ENCODE measurements at regions of chr11 and their contacts with region 1.

Region 1: DNA sequence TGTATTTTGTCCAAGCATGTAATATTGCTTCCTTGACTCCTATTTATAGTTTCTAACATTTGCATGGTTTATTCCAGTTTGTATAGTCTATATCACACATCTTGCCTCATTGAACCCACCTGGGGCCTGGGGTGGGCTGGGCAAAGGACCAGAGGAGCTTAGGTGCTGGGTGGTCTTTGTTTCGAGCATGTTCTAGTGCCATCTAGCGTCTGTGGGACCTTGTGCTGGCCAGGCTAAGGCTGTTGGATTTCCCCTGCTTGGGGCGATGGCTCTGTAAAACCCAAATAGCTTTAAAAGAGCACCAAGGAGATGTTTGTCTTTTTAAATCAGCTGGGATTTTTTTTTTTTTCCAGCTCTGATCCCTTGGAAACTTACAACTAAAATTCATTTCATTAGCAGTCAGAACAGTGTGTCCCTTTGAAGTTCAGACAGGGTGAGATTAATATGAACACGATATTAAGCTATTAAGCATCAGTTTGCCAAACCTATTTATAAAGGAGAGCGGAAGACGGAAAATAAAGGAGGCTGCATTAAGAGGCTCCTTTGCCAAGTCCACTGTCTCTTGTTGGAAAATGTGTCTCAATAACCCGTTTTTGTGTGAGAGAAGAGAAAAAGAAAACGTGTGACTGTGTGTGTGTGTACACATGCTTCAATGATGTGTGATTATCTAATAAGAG is 157.4 kb downstream of the COMMD9 start:
- DNase-seq: no peak
- H3K4me3 ChIP-seq: no peak overlapping the region
- H3K27ac ChIP-seq: no peak overlapping the region
- H3K27me3 ChIP-seq: no peaks in the 10 kb centered on the region
- CTCF ChIP-seq: peak; percentile 82

Region 2: GRCh38 chr11:35650006-35650405 is 481.9 kb before region 1 on chr11:
- CTCF ChIA-PET with region 1: no interaction called
- POLR2A ChIA-PET with region 1: no interaction called
- DNase-seq: no peak
- H3K4me3 ChIP-seq: no peak overlapping the region
- H3K27ac ChIP-seq: no peak overlapping the region
- H3K27me3 ChIP-seq: no peaks in the 10 kb centered on the region
- CTCF ChIP-seq: no peak

Region 3: DNA sequence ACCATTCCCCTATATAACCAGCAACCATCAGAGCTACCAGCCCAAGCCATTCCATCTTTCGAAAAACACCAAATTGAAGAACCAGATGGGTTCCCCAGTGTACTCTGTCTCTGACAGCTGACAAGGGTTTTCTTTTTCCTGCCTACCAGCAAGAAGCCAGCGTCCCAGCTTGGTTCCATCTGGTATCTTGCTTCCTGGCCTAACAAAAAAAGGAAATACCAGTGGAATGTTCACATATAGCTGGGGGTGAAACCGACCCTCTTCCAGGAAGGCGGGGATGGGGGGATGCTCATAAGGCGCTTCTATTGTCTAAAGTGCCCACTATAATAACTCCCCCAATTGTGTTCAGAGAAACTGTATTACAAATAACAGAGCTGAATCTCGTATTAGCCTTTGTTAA is 15.7 kb before region 1 on chr11:
- CTCF ChIA-PET with region 1: interaction called, 16 read pairs
- POLR2A ChIA-PET with region 1: no interaction called
- DNase-seq: no peak
- H3K4me3 ChIP-seq: no peak overlapping the region
- H3K27ac ChIP-seq: no peak overlapping the region
- H3K27me3 ChIP-seq: no peaks in the 10 kb centered on the region
- CTCF ChIP-seq: no peak

Region 4: GRCh38 chr11:36149538-36150242 is 17.8 kb after region 1 on chr11:
- CTCF ChIA-PET with region 1: interaction called, 13 read pairs
- POLR2A ChIA-PET with region 1: no interaction called
- DNase-seq: peak; percentile 97
- H3K4me3 ChIP-seq: no peak overlapping the region
- H3K27ac ChIP-seq: peak overlapping the region; percentile 95
- H3K27me3 ChIP-seq: no peaks in the 10 kb centered on the region
- CTCF ChIP-seq: peak; percentile 67

Region 5: GRCh38 chr11:36258730-36259360 is 127.0 kb after region 1 on chr11:
- CTCF ChIA-PET with region 1: interaction called, 10 read pairs
- POLR2A ChIA-PET with region 1: no interaction called
- DNase-seq: peak; percentile 45
- H3K4me3 ChIP-seq: no peak overlapping the region
- H3K27ac ChIP-seq: no peak overlapping the region
- H3K27me3 ChIP-seq: peaks cover 14% of the 10 kb centered on the region
- CTCF ChIP-seq: peak; percentile 81

Region 6: GRCh38 chr11:36326524-36327419 is 194.9 kb after region 1 on chr11:
- CTCF ChIA-PET with region 1: no interaction called
- POLR2A ChIA-PET with region 1: no interaction called
- DNase-seq: no peak
- H3K4me3 ChIP-seq: no peak overlapping the region
- H3K27ac ChIP-seq: no peak overlapping the region
- H3K27me3 ChIP-seq: no peaks in the 10 kb centered on the region
- CTCF ChIP-seq: no peak

Region 7: GRCh38 chr11:36622431-36623136 is 490.7 kb after region 1 on chr11:
- CTCF ChIA-PET with region 1: no interaction called
- POLR2A ChIA-PET with region 1: no interaction called
- DNase-seq: peak; percentile 0
- H3K4me3 ChIP-seq: no peak overlapping the region
- H3K27ac ChIP-seq: no peak overlapping the region
- H3K27me3 ChIP-seq: no peaks in the 10 kb centered on the region
- CTCF ChIP-seq: peak; percentile 60